ENCODE measurements at regions of chr16 and their contacts with region 1.

Region 1: DNA sequence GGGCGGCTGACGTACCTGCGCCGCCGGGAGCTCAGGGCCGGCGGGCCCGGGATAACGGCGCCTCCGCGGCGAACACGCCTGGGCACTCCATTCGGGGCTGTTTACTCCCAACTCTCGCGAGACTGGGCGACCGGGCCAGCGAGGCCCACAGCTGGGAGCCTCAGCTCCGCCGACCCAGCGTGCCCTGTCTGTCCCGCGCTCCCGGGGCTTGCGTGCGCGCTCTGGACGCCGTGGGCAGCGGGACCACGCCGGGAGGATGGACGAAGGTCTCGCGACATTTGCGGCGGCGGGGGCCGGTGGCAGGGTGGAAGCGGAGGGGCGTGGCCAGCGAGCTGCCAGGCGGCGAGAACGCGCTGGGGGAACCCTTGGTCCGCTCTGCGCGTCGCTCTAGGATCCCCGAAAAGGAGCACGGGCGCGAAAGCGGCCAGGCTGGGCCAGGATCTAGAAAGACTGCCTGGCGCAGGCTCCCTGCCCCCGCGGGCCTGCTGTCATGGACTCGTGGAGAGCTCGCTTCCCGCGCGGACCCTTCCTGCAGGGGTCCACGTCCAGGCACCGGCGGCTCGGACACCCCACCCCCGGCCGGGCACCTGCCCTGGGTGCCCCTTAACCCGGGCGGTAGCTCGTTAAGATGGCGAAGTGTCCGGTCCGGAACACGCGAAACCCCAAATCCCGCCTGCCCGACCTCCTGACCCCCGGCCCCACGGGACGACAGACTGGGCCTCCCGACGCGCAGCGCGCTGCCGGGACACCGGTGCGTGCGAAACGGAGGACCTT is at the start of gene MBTPS1:
- DNase-seq: peak; percentile 99
- H3K4me3 Mint-ChIP-seq: peak within 1 kb of the TSS; percentile 91
- H3K27ac Mint-ChIP-seq: peak within 1 kb of the TSS; percentile 92
- H3K4me1 Mint-ChIP-seq: peaks cover 25% of the 10 kb centered on the region
- H3K27me3 Mint-ChIP-seq: no peaks in the 10 kb centered on the region
- total RNA-seq, gene MBTPS1: 37.5 to 37.6 TPM

Region 2: GRCh38 chr16:83898463-83899271 is 218.2 kb before region 1 on chr16 and contains the start of gene MLYCD:
- CTCF ChIA-PET with region 1: interaction called, 3 read pairs
- POLR2A ChIA-PET with region 1: no interaction called
- intact Hi-C with region 1: loop called (anchors 2 kb)
- DNase-seq: peak; percentile 79
- H3K4me3 Mint-ChIP-seq: peak within 1 kb of the TSS; percentile 94
- H3K27ac Mint-ChIP-seq: peak within 1 kb of the TSS; percentile 70
- H3K4me1 Mint-ChIP-seq: peaks cover 27% of the 10 kb centered on the region
- H3K27me3 Mint-ChIP-seq: no peaks in the 10 kb centered on the region
- total RNA-seq, gene MLYCD: 3.0 to 3.5 TPM

Region 3: GRCh38 chr16:84096115-84097012 is 20.5 kb before region 1 on chr16:
- CTCF ChIA-PET with region 1: interaction called, 4 read pairs
- POLR2A ChIA-PET with region 1: interaction called, 4 read pairs
- intact Hi-C with region 1: loop called (anchors 2 kb)
- DNase-seq: no peak
- H3K4me3 Mint-ChIP-seq: no peak overlapping the region
- H3K27ac Mint-ChIP-seq: no peak overlapping the region
- H3K4me1 Mint-ChIP-seq: peaks cover 10% of the 10 kb centered on the region
- H3K27me3 Mint-ChIP-seq: no peaks in the 10 kb centered on the region

Region 4: DNA sequence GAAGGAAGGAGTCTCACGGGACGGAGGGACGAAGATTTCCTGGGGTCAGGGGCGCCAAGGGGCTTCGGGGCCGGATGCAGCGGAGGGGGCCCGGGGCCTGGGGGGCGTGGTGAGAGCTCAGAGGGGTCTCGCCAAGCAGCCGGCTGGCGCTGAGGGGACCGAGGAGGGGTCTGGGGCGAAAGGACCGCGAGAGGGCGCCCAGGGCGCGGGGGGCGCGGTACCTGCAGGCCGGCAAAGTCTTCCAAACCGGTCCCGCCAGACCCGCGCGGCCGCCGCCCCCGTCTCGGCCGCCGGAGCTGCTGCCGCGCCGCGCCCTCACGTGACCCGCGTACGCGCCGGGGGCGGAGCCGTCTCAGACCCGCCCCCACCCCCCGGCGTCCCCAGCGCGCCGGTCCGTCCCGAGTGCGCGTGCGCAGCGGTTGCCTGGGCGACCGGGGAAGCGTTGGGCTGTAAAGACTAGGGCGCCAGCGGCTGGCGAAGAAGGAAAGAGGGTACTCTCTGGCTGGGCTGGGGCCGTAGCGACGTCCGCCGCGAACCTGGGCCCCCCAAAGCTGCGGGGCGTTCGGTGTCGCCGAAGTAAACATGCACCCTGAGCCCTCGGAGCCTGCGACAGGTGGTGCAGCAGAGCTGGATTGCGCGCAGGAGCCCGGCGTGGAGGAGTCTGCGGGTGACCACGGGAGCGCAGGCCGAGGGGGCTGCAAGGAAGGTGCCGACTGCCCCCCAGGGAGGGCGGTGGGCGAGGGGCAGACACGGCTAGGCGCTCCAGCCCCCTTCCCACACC is 28.1 kb after region 1 on chr16 and contains the starts of genes DNAAF1 and HSDL1:
- CTCF ChIA-PET with region 1: interaction called, 8 read pairs
- POLR2A ChIA-PET with region 1: interaction called, 23 read pairs
- intact Hi-C with region 1: loop called (anchors 1 kb)
- DNase-seq: peak; percentile 95
- H3K4me3 Mint-ChIP-seq: peak within 1 kb of the TSS; percentile 93
- H3K27ac Mint-ChIP-seq: peak within 1 kb of the TSS; percentile 76
- H3K4me1 Mint-ChIP-seq: peaks cover 11% of the 10 kb centered on the region
- H3K27me3 Mint-ChIP-seq: no peaks in the 10 kb centered on the region
- total RNA-seq, gene DNAAF1: not detected
- total RNA-seq, gene HSDL1: 13.1 to 13.8 TPM

Region 5: GRCh38 chr16:84156342-84156784 is 39.5 kb after region 1 on chr16:
- CTCF ChIA-PET with region 1: no interaction called
- POLR2A ChIA-PET with region 1: no interaction called
- intact Hi-C with region 1: no loop called
- DNase-seq: no peak
- H3K4me3 Mint-ChIP-seq: no peak overlapping the region
- H3K27ac Mint-ChIP-seq: no peak overlapping the region
- H3K4me1 Mint-ChIP-seq: no peaks in the 10 kb centered on the region
- H3K27me3 Mint-ChIP-seq: peaks cover 26% of the 10 kb centered on the region

Region 6: DNA sequence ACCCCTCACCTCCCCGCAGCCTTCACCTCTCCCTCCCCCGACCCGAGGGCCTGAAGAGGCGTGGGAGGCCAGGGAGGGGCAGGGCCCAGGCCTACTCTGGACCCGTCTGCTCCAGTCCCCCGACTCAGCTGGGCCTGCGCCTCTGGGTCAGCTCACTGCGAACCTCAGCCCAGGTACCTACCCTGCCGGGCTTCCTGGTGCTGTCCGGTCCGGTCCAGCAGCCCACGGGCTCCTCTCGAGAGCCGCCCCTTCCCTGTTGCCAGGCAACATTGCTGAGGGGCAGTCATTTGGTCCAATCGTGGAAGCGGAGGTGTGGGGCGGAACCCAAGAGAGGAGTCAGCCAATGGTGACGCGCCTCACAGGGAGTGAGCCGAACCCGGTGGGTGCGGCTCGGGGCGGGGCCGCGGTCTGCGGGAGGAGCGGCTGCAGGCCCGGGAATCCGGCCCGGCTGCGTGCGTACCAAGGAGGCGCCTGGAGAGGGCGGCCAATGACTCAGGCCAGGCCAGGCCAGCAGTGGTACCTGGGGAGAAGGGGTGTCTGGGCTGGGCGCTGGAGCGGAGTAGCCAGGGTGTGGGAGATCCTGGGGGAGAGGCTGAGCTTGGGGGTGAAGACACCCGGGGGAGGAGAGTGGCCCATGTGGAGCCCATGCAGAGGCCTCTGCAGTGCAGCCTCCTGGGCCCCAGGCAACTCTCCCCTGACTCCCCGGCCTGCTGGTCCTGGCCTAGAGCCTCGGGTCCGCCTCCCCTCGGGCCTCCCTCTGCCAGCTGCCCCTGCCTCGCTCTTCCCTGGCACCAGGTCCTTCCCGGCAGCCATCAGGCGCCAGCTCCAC is 387.7 kb after region 1 on chr16 and contains the start of gene MEAK7:
- CTCF ChIA-PET with region 1: no interaction called
- POLR2A ChIA-PET with region 1: no interaction called
- intact Hi-C with region 1: loop called (anchors 2 kb)
- DNase-seq: peak; percentile 99
- H3K4me3 Mint-ChIP-seq: peak within 1 kb of the TSS; percentile 86
- H3K27ac Mint-ChIP-seq: peak within 1 kb of the TSS; percentile 87
- H3K4me1 Mint-ChIP-seq: peaks cover 51% of the 10 kb centered on the region
- H3K27me3 Mint-ChIP-seq: no peaks in the 10 kb centered on the region
- total RNA-seq, gene MEAK7: 12.9 to 13.6 TPM

Measured in activated CD4-positive, alpha-beta memory T cell treated with anti-CD3 and anti-CD28 coated beads for 36 hours (primary cell).